ENCODE measurements at regions of chr20 and their contacts with region 1.

Region 1: DNA sequence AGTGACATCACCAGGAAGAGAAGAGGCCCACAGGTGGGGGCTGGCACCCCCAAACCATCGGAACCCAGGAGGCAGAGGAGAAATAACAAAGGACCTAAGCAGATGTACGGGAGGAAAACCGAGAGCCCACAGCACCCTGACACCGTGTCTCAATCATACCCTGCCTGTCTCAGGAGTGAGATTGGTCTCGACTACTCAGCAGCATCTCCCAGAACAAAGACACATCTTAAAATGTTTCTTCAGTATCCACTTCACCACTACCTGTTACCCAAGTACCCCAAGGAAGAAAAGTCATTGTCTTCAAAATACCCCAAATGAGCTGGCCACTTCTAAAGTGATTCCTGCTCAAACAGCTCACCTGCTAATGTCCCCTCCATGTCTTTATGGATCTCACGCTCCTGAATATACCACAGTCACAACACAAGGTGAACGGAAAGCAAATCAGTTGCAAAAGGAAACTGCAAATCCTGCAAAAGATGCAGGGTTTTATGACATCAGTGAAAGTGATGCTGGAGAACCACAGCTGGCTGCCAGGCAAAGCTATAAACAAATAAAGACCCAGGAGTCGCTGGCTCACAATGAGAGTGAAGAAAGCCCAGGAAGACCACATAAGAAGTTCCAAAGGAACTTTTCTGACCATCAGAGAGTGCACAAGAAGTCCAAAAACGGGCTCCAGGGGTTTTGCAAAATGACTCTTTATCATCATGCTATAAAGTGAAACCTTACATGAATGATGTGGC is 44.1 kb downstream of the PREX1 start:
- DNase-seq: no peak
- ATAC-seq: no peak
- H3K4me3 ChIP-seq: no peak overlapping the region
- H3K27ac ChIP-seq: peak overlapping the region in 1 of 10 donors; percentile 41
- H3K4me1 ChIP-seq: peaks cover 0 to 75% (median 8%) of the 10 kb centered on the region in 9 donors
- H3K27me3 ChIP-seq: no peaks in the 10 kb centered on the region
- CTCF ChIP-seq: no peak

Region 2: GRCh38 chr20:48489656-48490055 is 294.0 kb before region 1 on chr20:
- intact Hi-C with region 1: no loop called
- DNase-seq: no peak
- ATAC-seq: no peak
- H3K4me3 ChIP-seq: no peak overlapping the region
- H3K27ac ChIP-seq: no peak overlapping the region
- H3K4me1 ChIP-seq: no peaks in the 10 kb centered on the region
- H3K27me3 ChIP-seq: peaks cover 0 to 46% (median 13%) of the 10 kb centered on the region in 7 donors
- CTCF ChIP-seq: no peak

Region 3: GRCh38 chr20:48722737-48723191 is 60.9 kb before region 1 on chr20:
- intact Hi-C with region 1: loop called in 1 of 10 experiments (anchors 2 kb)
- DNase-seq: no peak
- ATAC-seq: peak in 7 of 8 donors; percentile 11 to 82 (median 48)
- H3K4me3 ChIP-seq: peak overlapping the region in 1 of 10 donors; percentile 12
- H3K27ac ChIP-seq: peak overlapping the region; percentile 3 to 85 (median 46)
- H3K4me1 ChIP-seq: peaks cover 7 to 82% (median 23%) of the 10 kb centered on the region in 9 donors
- H3K27me3 ChIP-seq: no peaks in the 10 kb centered on the region
- CTCF ChIP-seq: no peak

Region 4: DNA sequence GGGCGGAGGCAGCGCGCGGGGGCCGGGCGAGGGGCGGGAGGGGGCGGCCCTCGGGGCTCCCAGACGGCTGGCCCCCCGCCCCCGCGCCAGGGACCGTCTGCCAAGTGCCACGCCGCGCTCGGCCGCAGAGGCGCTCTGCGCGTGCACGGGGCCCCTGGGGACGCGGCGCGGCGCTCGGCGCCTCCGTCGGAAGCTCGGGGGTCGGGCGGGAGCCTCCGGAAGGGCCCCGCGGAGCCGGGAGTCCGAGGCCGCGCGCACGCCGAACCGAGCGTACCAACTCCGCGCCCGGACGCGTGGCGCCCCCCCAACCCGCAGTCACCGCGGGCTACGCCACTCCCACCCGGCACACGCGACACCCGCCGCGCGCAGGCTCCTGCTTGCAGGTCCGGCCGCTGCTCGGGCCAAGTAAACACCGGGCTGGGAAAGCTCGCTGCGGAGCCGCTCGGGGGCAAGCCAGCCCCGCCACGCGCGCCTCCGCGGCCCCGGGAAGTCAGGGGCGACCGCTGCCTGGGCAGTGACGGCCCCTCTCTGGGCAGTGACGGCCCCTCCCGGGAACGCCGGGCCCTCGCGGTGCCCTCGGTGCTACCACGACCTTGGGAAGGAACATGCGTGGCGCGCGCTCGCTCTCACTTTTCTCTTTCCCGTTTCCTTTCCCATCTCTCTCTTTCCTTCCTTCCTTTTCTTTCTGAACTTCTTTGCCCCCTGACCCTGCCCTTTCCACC is 44.5 kb after region 1 on chr20:
- intact Hi-C with region 1: no loop called
- DNase-seq: peak; percentile 83
- ATAC-seq: peak; percentile 56 to 85 (median 72)
- H3K4me3 ChIP-seq: peak overlapping the region; percentile 24 to 84 (median 66)
- H3K27ac ChIP-seq: peak overlapping the region in 9 of 10 donors; percentile 44 to 92 (median 80)
- H3K4me1 ChIP-seq: peaks cover 0 to 63% (median 42%) of the 10 kb centered on the region in 9 donors
- H3K27me3 ChIP-seq: no peaks in the 10 kb centered on the region
- CTCF ChIP-seq: peak in 4 of 9 donors; percentile 5 to 26 (median 13)